GM12878 (cell line): ENCODE measurements at regions of chr1 and their contacts with region 1.

Region 1: DNA sequence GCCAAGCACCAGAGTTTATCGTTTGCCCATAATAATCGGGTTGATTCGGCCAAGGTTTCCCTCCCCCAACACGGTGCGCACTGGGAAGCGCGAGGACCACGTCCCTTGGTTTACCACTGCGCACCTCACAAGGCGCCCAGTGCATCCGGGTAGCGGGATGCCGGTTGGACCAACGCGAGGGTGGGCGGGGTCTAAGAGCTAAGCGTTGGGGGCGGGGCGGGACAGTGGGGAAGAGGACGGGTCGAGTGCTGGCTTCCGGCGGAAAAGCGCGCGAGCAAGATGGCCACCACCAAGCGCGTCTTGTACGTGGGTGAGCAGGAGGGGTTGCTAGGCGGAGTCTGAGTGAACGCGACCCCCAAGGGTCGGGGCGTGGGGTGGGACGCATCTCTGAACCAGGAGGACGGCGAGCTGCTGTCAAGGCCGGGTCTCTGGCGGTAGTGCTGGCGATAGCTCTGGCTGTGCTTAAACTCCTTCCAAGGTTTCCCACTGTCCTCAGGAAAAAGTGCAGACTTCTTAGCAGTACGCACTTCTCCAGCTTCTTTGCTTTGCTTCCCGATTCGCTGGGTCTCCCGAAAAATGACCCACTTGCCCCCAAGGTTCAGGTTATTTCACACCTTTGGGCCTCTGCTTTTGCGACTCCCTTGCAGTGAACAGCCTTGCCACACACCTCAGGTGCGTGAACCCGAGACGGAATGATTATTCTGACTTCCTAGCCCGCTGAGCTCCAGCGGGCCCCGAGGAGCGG is at the start of gene PPIE:
- DNase-seq: peak; percentile 70
- ATAC-seq: peak; percentile 99
- H3K4me3 ChIP-seq: peak within 1 kb of the TSS; percentile 99
- H3K27ac ChIP-seq: peak within 1 kb of the TSS; percentile 79
- H3K4me1 ChIP-seq: peaks cover 9% of the 10 kb centered on the region
- H3K27me3 ChIP-seq: no peaks in the 10 kb centered on the region
- CTCF ChIP-seq: no peak
- EP300 ChIP-seq: no peak
- POLR2A ChIP-seq: peak; percentile 99
- RAD21 ChIP-seq: no peak
- polyA plus RNA-seq, gene PPIE: 130 to 163 TPM

Region 2: DNA sequence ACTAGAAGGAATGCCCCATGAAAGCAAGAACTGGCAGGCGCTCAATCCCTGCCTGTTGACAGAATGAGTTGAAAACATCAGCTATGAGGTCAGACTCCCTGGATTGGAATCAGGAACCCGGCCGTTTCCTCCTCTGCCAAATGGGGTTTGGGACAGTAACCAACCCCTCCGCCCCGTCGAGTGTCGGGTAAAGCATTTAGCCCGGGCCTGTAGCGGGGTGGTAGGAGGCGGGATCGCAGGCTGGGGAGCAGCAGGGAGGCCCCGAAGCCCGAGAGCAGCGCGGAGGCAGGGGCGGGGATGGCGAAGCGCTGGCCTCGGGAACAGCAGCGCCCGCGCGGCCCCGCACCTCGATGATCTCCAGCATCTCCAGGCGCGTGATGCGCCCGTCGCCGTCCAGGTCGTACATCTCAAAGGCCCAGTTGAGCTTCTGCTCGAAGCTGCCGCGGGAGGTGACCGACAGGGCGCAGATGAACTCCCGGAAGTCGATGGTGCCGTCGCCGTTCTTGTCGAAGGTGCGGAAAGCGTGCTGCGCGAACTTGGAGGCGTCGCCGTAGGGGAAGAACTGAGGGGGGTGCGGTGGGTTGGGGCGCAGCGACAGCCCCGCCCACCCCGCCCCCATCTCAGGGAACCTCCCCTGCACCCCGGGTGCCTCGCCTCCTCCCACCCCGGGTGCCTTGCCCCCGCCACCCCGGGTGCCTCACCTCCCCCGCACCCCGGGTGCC is 55.0 kb before region 1 on chr1:
- CTCF ChIA-PET with region 1: no interaction called
- POLR2A ChIA-PET with region 1: no interaction called
- RAD21 ChIA-PET with region 1: no interaction called
- SMC1A ChIA-PET with region 1: no interaction called
- in situ Hi-C with region 1: no loop called
- intact Hi-C with region 1: no loop called
- DNase-seq: no peak
- ATAC-seq: no peak
- H3K4me3 ChIP-seq: no peak overlapping the region
- H3K27ac ChIP-seq: no peak overlapping the region
- H3K4me1 ChIP-seq: no peaks in the 10 kb centered on the region
- H3K27me3 ChIP-seq: peaks cover 4 to 6% of the 10 kb centered on the region in 2 experiments
- CTCF ChIP-seq: no peak
- EP300 ChIP-seq: no peak
- POLR2A ChIP-seq: no peak
- RAD21 ChIP-seq: no peak

Region 3: DNA sequence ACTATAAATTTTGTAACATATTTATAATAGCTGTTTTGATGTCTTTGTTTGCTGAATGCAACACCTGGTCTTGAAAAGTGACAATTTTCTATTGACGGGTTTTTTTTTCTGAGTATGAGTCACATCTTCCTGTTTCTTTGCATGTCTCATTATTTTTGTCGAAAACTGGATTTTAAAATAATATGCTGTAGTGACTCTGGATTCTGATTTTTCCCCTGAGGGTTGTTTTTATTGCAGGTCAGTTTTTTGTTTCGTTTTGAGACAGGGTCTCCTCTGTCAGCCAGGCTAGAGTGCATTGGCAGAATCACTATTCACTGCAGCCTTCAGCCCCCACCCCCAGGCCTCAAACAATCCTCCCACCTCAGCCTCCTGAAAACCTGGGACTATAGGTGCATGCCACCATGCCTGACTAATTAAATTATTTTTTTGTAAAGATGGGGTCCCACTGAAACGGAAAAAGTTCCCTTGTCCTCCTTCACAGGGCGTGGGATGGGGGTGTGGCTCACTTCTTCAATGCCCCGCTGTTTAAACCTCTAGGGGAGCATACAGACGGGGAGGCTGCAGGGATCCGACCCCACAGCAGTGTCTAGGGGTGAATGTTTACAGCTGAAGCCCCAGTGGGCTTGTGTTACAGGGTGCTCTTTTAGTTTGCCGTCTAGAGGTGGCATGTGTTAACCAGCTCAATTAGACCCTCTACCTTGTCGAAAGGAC is 11.4 kb before region 1 on chr1:
- CTCF ChIA-PET with region 1: interaction called, 3 read pairs
- POLR2A ChIA-PET with region 1: interaction called, 3 read pairs
- RAD21 ChIA-PET with region 1: interaction called, 3 read pairs
- SMC1A ChIA-PET with region 1: interaction called, 10 read pairs
- in situ Hi-C with region 1: no loop called
- intact Hi-C with region 1: no loop called
- DNase-seq: peak; percentile 65
- ATAC-seq: peak; percentile 94
- H3K4me3 ChIP-seq: no peak overlapping the region
- H3K27ac ChIP-seq: no peak overlapping the region
- H3K4me1 ChIP-seq: peaks cover 14% of the 10 kb centered on the region
- H3K27me3 ChIP-seq: no peaks in the 10 kb centered on the region
- CTCF ChIP-seq: no peak
- EP300 ChIP-seq: peak; percentile 36 to 52; a peak in 2 of 4 replicates
- POLR2A ChIP-seq: no peak
- RAD21 ChIP-seq: no peak